ENCODE measurements at regions of chr6 and their contacts with region 1.

Region 1: GRCh38 chr6:170584181-170584953 is at the start of gene PDCD2:
- DNase-seq: peak; percentile 91
- H3K4me3 Mint-ChIP-seq: peak within 1 kb of the TSS; percentile 99
- H3K27ac Mint-ChIP-seq: peak within 1 kb of the TSS; percentile 93
- H3K4me1 Mint-ChIP-seq: peaks cover 36% of the 10 kb centered on the region
- H3K27me3 Mint-ChIP-seq: no peaks in the 10 kb centered on the region
- total RNA-seq, gene PDCD2: 142 and 144 TPM in 2 replicates

Region 2: GRCh38 chr6:170554013-170554795 is 30.2 kb before region 1 on chr6 and contains the start of gene TBP:
- intact Hi-C with region 1: loop called (anchors 1 kb)
- DNase-seq: peak; percentile 96
- H3K4me3 Mint-ChIP-seq: no peak within 1 kb of the TSS
- H3K27ac Mint-ChIP-seq: no peak within 1 kb of the TSS
- H3K4me1 Mint-ChIP-seq: peaks cover 34% of the 10 kb centered on the region
- H3K27me3 Mint-ChIP-seq: no peaks in the 10 kb centered on the region
- total RNA-seq, gene TBP: 27.8 and 29.6 TPM in 2 replicates